ENCODE measurements at regions of chrX and their contacts with region 1.

Region 1: DNA sequence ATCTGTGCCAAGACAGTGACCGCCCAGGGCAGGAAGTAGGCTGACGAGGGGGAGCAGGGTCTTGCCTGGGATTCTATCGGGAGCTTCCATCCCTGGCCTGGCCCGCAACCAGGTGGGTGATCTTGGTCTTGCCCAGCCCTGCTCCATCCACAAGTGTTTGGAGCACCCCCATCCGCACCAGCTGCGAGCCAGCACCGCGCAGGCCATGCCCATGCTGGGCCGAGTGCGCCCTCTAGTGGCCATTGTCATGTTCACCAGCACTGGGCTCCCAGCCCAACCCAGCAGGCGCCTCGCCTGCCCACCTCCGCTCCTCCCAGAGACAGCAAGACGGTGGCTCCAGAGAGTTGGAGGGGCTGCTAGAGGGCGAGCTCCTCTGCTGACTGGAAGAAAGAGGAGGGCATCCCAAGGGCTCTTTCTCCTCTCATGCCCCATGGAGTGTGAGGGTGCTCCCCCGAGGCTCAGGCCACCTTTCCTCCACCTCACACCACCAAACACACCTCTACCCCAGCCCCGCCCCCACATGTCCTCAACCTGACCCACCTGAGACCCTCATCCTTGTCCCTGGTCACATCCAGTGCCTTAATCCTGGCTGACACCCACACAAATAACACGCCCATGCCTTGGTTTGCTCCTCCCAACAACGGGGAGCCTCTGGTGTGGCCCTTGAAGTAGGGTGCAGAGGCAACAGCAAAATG is 9.8 kb upstream of the ATP2B3 start:
- DNase-seq: peak; percentile 71 to 98 (median 86)

Region 2: DNA sequence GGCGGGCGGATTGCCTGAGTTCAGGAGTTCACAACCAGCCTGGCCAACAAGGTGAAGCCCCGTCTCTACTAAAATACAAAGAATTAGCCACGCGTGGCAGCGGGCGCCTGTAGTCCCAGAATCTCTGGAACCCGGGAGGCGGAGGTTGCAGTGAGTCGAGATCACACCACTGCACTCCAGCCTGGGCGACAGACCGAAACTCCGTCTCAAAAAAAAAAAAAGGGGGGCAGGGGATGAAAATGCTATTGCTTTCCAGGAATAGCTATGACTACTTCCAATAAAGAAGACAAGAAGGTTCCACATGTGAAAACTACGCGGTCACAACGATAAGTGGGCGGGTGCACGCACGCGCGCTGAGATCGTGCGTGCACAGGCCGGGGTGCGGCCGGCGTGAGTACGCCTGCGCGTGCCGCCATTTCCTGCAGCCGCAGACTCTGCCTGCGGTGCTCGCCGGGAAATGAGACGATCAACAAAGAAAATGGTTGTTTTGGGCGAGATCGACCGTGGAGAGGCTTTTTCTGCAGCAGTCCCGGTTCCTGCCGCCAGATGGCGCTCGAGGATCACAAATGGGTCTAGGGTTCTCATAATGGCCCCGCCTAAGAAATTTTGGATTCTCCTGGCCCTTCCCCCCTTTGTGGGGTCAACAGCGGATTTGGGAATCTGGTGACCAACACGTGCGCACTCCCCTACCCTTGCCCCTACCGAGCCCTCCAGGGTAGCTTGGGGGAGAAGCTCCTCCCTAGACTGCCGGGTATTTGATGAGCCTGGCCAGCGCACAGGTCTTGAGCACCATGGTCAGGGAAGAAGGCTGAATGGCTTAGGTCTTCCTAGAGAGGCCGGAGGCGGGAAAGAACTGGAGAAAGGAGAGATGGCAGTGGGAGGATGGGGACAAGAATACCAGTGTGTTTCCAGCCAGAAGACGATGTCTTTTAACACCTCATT is 548.8 kb before region 1 on chrX:
- intact Hi-C with region 1: loop called (anchors 10 kb)
- DNase-seq: peak; percentile 78 to 98 (median 88)

Region 3: GRCh38 chrX:153470435-153471363 is 36.9 kb before region 1 on chrX and contains the start of gene HAUS7:
- intact Hi-C with region 1: loop called (anchors 2 kb)
- DNase-seq: peak; percentile 76 to 98 (median 86)

Region 4: GRCh38 chrX:153554519-153555167 is 47.0 kb after region 1 on chrX:
- intact Hi-C with region 1: no loop called
- DNase-seq: peak; percentile 70 to 97 (median 84)